Activated T-helper 2 cell treated with anti-CD3 and anti-CD28 coated beads, Interferon-gamma antibody, Interleukin-2, Interleukin-4, amounts not matched to agents 10 μg/mL and 5 μg/mL and 100 μg/mL, durations not matched to agents 14 hours and 24 hours and 36 hours (primary cell): ENCODE measurements at regions of chr11 and their contacts with region 1.

Region 1: DNA sequence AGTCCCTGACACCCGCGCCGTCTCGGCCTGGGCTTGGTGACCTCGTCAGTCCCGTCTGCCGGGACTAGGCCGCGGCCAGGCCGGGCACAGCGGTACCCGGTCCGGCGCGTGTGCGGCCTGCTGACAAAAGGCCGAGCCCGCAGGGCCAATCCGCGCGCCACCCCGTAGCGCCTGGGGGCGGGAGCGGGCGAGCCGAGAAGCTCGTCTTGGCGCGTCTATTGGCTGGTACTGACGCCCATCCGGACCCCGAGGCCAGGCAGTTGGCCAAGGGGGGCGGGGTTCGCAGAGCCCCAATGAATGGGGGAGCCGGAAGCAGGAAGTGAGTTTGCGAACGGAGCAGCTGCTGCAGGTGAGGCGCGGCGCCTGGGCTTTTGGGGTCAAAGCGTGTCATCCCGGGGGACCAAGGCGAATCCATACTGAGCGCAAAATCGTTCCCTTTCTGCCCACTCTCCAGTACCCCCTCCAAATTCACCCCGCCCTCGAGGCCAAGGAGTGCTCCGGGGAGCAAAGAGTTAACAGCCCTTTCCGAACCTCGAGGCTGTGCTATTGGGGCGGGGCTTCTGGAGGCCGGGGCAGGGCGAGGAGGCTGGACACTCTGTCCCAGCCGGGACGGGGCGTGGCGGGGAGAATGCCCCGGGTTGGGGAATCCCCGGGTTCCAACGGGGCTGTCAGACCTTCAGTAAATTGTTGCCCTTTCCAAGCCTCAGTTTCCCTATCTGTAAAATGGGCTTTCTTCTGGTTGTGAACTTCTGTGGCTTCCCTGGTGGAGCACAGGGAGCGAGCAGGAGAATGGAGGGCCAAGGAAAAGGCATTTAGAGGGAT is at the start of gene DPP3:
- DNase-seq: peak; percentile 96
- H3K4me3 Mint-ChIP-seq: peak within 1 kb of the TSS; percentile 85
- H3K27ac Mint-ChIP-seq: peak within 1 kb of the TSS; percentile 84
- H3K4me1 Mint-ChIP-seq: peaks cover 28% of the 10 kb centered on the region
- H3K27me3 Mint-ChIP-seq: no peaks in the 10 kb centered on the region
- total RNA-seq, gene DPP3: 109 and 119 TPM in 2 replicates

Region 2: GRCh38 chr11:66466225-66467027 is 13.9 kb before region 1 on chr11 and contains the start of gene PELI3:
- intact Hi-C with region 1: loop called (anchors 1 kb)
- DNase-seq: peak; percentile 86
- H3K4me3 Mint-ChIP-seq: peak within 1 kb of the TSS; percentile 91
- H3K27ac Mint-ChIP-seq: peak within 1 kb of the TSS; percentile 81
- H3K4me1 Mint-ChIP-seq: peaks cover 29% of the 10 kb centered on the region
- H3K27me3 Mint-ChIP-seq: no peaks in the 10 kb centered on the region
- total RNA-seq, gene PELI3: 14.6 and 15.7 TPM in 2 replicates

Region 3: DNA sequence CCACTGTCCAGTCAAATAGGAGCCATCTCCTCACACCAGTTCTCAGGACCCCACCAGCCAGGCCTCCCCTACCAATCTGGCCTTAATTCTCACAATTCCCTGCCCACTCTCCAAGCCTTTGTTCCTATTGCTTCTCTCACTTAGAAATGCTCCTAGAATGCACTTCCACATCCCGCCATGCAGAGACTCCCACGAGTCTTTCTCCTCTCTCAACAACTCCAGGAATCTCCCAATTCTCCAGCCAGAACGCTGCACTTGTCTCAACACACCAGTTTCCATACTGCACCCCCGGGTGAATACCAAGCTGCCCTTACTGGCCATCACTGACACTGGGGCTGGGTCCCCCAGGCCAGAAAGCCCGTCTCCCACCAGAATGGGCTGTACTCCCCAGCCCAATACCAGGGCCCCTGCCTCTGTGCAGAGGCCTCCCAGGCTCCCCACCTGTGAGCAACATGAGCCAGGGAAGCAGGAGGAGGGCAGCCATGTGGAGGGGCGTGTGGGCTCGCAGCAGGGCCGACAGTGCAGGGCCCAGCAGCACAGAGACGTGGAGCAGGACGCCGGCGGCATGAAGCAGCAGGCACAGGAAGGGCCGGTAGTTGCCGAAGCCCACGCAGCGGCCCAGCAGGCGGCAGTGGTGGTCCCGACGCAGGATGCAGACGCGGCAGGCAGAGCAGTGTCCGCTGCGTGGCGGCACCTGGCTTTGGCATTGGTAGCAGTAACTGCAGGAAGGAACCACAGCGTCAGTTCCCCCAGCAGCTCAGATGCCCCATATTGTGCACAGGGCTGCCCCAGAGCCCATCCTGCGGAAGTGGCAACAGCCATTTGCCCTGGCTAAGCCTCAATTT is 63.2 kb after region 1 on chr11:
- intact Hi-C with region 1: no loop called
- DNase-seq: peak; percentile 38
- H3K4me3 Mint-ChIP-seq: peak overlapping the region; percentile 49
- H3K27ac Mint-ChIP-seq: peak overlapping the region; percentile 74
- H3K4me1 Mint-ChIP-seq: peaks cover 24% of the 10 kb centered on the region
- H3K27me3 Mint-ChIP-seq: peaks cover 3% of the 10 kb centered on the region